GM12878 (cell line): ENCODE measurements at regions of chrX and their contacts with region 1.

Region 1: DNA sequence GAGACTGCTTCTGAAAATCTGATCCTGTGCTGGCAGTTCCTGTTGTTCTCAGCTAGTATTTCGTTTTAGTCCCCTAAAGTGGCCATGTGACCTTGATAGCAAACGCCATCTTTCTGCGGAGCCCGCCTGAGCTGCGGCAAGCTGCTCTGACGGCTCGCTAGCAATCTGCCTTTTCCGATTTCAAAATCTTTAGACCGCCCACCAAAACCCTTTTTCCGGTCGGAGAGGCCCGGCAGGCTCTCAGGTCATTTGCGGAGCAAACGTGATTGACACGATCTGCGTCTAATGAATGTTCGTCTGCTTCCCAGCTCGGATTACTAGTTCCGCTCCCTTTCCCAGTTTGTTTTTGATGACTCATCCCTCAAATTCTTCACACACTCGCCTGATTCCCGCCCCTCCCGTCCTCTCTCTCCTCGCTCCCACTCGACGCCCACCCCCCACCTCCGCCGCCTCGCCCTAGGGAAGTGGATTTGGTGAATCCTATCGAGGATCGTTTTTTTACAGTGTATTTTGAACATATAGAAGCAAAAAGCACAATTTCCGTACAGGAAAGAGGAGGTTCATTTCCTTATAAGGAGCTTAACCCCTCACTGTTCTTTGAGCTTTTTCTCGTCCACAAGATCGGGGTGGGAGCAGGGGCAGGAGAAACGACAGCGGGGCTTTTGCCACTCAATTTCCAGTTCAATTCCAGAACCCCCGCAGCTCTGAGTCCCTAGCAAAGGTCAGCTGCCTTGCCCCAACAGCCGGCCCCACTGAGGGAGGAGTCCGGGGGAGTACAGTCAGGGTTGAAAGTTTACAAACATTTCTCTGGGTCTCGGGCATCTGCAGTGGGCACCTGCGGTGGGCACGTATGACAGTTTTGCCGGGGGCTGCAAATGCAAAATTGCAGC is 37.5 kb downstream of the NLGN3 start:
- DNase-seq: peak; percentile 82
- ATAC-seq: peak; percentile 95
- H3K4me3 ChIP-seq: peak overlapping the region; percentile 61
- H3K27ac ChIP-seq: peak overlapping the region; percentile 93
- H3K4me1 ChIP-seq: no peaks in the 10 kb centered on the region
- H3K27me3 ChIP-seq: no peaks in the 10 kb centered on the region
- CTCF ChIP-seq: no peak
- EP300 ChIP-seq: no peak
- POLR2A ChIP-seq: peak; percentile 80
- RAD21 ChIP-seq: no peak

Region 2: DNA sequence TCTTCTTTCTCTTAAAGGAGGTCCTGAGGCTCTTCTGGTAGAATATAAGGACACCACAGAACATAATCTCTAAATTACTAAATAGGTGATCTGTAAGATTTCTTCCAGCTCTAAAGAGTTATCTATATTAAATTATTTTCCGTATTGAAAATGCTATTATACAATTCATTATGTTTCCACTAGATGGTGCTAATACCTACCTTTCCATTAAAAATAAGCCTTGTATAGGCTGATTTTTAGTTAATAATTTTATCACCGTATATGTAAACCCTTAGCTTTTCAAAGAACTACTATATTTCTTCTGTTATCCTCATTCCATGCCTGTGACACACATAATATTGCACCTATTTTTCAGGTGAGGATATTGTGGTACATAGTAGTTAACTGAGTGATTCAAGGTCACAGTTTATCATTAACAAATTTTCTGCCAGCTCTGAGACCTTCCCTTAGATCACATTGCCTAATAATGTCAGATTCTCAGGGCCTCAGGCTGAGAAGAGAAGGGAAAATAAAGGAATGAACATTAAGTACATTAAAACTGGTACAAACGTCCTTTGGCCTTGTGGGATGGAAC is 412.4 kb before region 1 on chrX:
- CTCF ChIA-PET with region 1: interaction called, 5 read pairs
- POLR2A ChIA-PET with region 1: no interaction called
- RAD21 ChIA-PET with region 1: no interaction called
- SMC1A ChIA-PET with region 1: interaction called, 7 read pairs
- in situ Hi-C with region 1: loop called (anchors 5 kb)
- intact Hi-C with region 1: loop called (anchors 2 kb)
- DNase-seq: no peak
- ATAC-seq: no peak
- H3K4me3 ChIP-seq: no peak overlapping the region
- H3K27ac ChIP-seq: no peak overlapping the region
- H3K4me1 ChIP-seq: no peaks in the 10 kb centered on the region
- H3K27me3 ChIP-seq: no peaks in the 10 kb centered on the region
- CTCF ChIP-seq: peak in 1 of 3 experiments; percentile 32; a peak in 3 of 6 replicates
- EP300 ChIP-seq: no peak
- POLR2A ChIP-seq: no peak
- RAD21 ChIP-seq: 0 out of 2 replicates have a peak, but pooled peaks have one; percentile 21

Region 3: GRCh38 chrX:70998411-70999027 is 183.6 kb before region 1 on chrX:
- CTCF ChIA-PET with region 1: interaction called, 28 read pairs
- POLR2A ChIA-PET with region 1: no interaction called
- RAD21 ChIA-PET with region 1: interaction called, 5 read pairs
- SMC1A ChIA-PET with region 1: interaction called, 14 read pairs
- in situ Hi-C with region 1: no loop called
- intact Hi-C with region 1: loop called (anchors 1 kb)
- DNase-seq: no peak
- ATAC-seq: peak; percentile 59
- H3K4me3 ChIP-seq: no peak overlapping the region
- H3K27ac ChIP-seq: no peak overlapping the region
- H3K4me1 ChIP-seq: no peaks in the 10 kb centered on the region
- H3K27me3 ChIP-seq: no peaks in the 10 kb centered on the region
- CTCF ChIP-seq: peak; percentile 30 to 49 (median 38); a peak in 4 of 6 replicates
- EP300 ChIP-seq: no peak
- POLR2A ChIP-seq: no peak
- RAD21 ChIP-seq: peak; percentile 70

Region 4: GRCh38 chrX:71103110-71103983 is 78.8 kb before region 1 on chrX:
- CTCF ChIA-PET with region 1: interaction called, 55 read pairs
- POLR2A ChIA-PET with region 1: interaction called, 8 read pairs
- RAD21 ChIA-PET with region 1: interaction called, 6 read pairs
- SMC1A ChIA-PET with region 1: interaction called, 13 read pairs
- in situ Hi-C with region 1: no loop called
- intact Hi-C with region 1: loop called (anchors 1 kb)
- DNase-seq: no peak
- ATAC-seq: peak; percentile 76
- H3K4me3 ChIP-seq: peak overlapping the region; percentile 42
- H3K27ac ChIP-seq: peak overlapping the region; percentile 61
- H3K4me1 ChIP-seq: peaks cover 3% of the 10 kb centered on the region; the same call in 1 of the 2 replicates
- H3K27me3 ChIP-seq: no peaks in the 10 kb centered on the region
- CTCF ChIP-seq: no peak
- EP300 ChIP-seq: peak; percentile 26 to 43; a peak in 1 of 4 replicates
- POLR2A ChIP-seq: no peak; the same call in 1 of the 2 replicates
- RAD21 ChIP-seq: no peak

Region 5: DNA sequence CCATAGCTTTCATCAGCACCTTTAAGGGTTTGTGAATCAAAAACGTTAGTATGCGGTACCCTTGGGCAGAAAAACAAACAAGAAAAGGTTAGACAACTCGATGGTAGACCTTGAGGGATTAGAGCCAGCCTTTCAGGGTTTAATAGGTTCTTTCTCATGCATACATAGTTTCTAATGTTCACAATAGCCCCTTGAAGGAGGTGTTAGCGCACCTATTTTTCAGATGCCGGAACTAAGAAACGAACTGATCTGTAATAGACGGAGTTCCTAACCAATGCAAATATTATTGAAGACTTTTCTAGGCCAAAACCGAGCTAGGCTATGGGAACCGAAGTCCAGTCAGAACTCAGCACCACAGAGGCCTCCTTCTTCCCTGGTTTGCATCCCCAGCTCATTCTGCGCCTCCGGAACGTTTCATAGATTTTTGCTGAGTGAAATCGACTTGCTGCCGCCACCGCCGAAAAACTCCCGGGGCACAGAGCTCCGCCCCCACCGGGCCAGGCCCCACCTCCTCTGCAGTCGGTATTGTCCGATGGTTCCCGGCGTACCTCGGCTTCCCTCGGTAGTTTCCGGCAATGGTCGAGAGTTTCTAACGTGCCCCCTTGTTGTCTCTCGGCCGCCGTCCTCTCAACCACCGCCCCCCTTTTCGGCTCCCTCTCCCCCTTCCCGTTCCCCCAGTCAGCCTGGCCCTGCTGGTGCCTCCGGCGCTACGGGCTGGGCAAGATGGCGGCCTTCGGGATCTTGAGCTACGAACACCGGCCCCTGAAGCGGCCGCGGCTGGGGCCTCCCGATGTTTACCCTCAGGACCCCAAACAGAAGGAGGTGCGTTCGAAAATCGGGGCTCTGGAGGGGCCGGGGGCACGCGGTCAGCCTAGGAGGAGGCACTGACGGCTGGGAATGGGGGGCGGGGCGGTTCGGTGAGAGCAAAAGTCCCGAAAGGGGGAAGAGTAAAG is 63.8 kb before region 1 on chrX and contains the start of gene MED12:
- CTCF ChIA-PET with region 1: no interaction called
- POLR2A ChIA-PET with region 1: interaction called, 27 read pairs
- RAD21 ChIA-PET with region 1: interaction called, 5 read pairs
- SMC1A ChIA-PET with region 1: no interaction called
- in situ Hi-C with region 1: no loop called
- intact Hi-C with region 1: no loop called
- DNase-seq: peak; percentile 52
- ATAC-seq: peak; percentile 99
- H3K4me3 ChIP-seq: peak within 1 kb of the TSS; percentile 85
- H3K27ac ChIP-seq: peak within 1 kb of the TSS; percentile 81
- H3K4me1 ChIP-seq: peaks cover 2% of the 10 kb centered on the region; the same call in 1 of the 2 replicates
- H3K27me3 ChIP-seq: no peaks in the 10 kb centered on the region
- CTCF ChIP-seq: no peak
- EP300 ChIP-seq: no peak
- POLR2A ChIP-seq: peak; percentile 67
- RAD21 ChIP-seq: no peak
- polyA plus RNA-seq, gene MED12: 0.68 to 1.7 TPM

Region 6: DNA sequence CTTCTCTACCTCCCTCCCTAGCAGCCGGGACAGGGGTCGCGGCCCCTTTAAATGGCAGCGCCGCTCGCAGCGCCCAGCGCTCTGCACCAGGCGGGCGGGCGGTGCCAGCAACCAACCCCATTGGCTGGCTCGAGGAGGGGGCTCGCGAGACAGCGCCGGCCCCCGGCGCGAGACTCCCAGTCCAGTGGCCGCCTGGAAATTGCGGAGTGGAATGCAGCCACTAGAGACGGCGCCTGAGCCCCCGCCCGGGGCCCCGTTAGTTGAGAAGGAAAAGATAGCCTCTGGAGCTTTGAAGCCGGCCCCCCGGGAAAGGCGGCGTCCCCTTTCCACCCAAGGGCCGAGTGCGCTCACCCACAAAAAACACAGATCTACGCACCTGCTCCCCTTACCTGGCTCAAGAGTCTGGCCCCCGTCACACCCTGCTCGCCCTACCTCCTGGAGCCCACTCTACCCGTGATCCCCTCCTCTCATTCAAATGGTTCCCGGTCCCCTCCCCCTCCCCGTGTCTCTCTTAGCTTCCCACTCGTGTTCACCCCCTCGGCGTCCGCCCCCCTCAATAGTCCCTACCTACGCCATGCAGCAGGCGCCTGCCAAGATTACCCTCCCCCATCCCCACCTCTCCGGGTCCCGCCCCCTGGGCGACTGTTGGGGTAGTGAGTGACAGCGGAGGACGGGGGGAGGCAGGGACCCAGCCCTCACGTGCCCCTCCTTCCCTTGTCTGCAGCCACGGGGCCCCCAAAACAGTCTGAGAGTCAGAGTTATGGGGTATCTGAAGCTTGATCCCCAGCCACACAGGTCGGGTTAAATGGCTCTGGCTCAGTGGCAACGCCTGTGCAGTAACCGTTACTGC is 72.2 kb after region 1 on chrX and contains the start of gene ZMYM3:
- CTCF ChIA-PET with region 1: no interaction called
- POLR2A ChIA-PET with region 1: interaction called, 4 read pairs
- RAD21 ChIA-PET with region 1: no interaction called
- SMC1A ChIA-PET with region 1: no interaction called
- in situ Hi-C with region 1: no loop called
- intact Hi-C with region 1: loop called (anchors 5 kb)
- DNase-seq: peak; percentile 24
- ATAC-seq: peak; percentile 93
- H3K4me3 ChIP-seq: peak within 1 kb of the TSS; percentile 89
- H3K27ac ChIP-seq: peak within 1 kb of the TSS; percentile 72
- H3K4me1 ChIP-seq: peaks cover 6% of the 10 kb centered on the region; the same call in 1 of the 2 replicates
- H3K27me3 ChIP-seq: no peaks in the 10 kb centered on the region
- CTCF ChIP-seq: no peak
- EP300 ChIP-seq: no peak
- POLR2A ChIP-seq: peak; percentile 69
- RAD21 ChIP-seq: no peak
- polyA plus RNA-seq, gene ZMYM3: 2.3 to 5.1 TPM

Region 7: GRCh38 chrX:71365876-71366673 is 183.9 kb after region 1 on chrX and contains the start of gene TAF1:
- CTCF ChIA-PET with region 1: interaction called, 5 read pairs
- POLR2A ChIA-PET with region 1: interaction called, 8 read pairs
- RAD21 ChIA-PET with region 1: interaction called, 10 read pairs
- SMC1A ChIA-PET with region 1: interaction called, 12 read pairs
- in situ Hi-C with region 1: no loop called
- intact Hi-C with region 1: loop called (anchors 2 kb)
- DNase-seq: peak; percentile 95
- ATAC-seq: peak; percentile 93
- H3K4me3 ChIP-seq: peak within 1 kb of the TSS; percentile 59
- H3K27ac ChIP-seq: peak within 1 kb of the TSS; percentile 85
- H3K4me1 ChIP-seq: no peaks in the 10 kb centered on the region
- H3K27me3 ChIP-seq: no peaks in the 10 kb centered on the region
- CTCF ChIP-seq: no peak
- EP300 ChIP-seq: no peak
- POLR2A ChIP-seq: peak; percentile 87
- RAD21 ChIP-seq: no peak
- polyA plus RNA-seq, gene TAF1: 4.1 to 4.8 TPM